Activated naive CD4-positive, alpha-beta T cell treated with anti-CD3 and anti-CD28 coated beads for 36 hours (primary cell): ENCODE measurements at regions of chr5 and their contacts with region 1.

Region 1: DNA sequence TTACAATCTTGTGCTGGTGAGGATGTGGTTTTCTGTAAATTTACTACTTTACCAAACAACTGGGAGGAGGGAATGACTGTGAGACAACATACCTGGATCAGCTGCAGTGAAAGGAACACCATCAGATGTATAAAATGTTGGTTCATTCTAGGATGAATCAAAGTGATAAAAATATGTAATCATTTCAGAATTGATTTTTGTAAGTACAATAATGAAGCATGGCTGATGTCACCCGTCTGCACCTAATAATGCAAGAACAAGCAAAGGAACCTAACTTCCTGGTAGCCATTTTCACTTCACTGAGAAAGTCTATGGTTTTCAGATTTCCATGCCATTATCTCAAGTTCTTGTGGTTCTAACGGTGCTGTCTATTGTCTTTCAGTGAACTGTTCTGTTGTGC is 18.7 kb upstream of the C5orf34 start:
- DNase-seq: peak; percentile 24
- H3K4me3 Mint-ChIP-seq: no peak overlapping the region
- H3K27ac Mint-ChIP-seq: peak overlapping the region; percentile 71
- H3K4me1 Mint-ChIP-seq: peaks cover 10% of the 10 kb centered on the region
- H3K27me3 Mint-ChIP-seq: no peaks in the 10 kb centered on the region

Region 2: GRCh38 chr5:43514816-43515677 is 18.6 kb before region 1 on chr5 and contains the start of gene C5orf34:
- CTCF ChIA-PET with region 1: interaction called, 5 read pairs
- intact Hi-C with region 1: loop called (anchors 1 kb)
- DNase-seq: peak; percentile 98
- H3K4me3 Mint-ChIP-seq: peak within 1 kb of the TSS; percentile 94
- H3K27ac Mint-ChIP-seq: peak within 1 kb of the TSS; percentile 99
- H3K4me1 Mint-ChIP-seq: peaks cover 25% of the 10 kb centered on the region
- H3K27me3 Mint-ChIP-seq: no peaks in the 10 kb centered on the region
- total RNA-seq, gene C5orf34: 14.7 to 16.3 TPM

Region 3: GRCh38 chr5:43712081-43712480 is 178.4 kb after region 1 on chr5:
- CTCF ChIA-PET with region 1: no interaction called
- intact Hi-C with region 1: no loop called
- DNase-seq: no peak
- H3K4me3 Mint-ChIP-seq: no peak overlapping the region
- H3K27ac Mint-ChIP-seq: no peak overlapping the region
- H3K4me1 Mint-ChIP-seq: no peaks in the 10 kb centered on the region
- H3K27me3 Mint-ChIP-seq: no peaks in the 10 kb centered on the region